ENCODE measurements at regions of chr7 and their contacts with region 1.

Region 1: DNA sequence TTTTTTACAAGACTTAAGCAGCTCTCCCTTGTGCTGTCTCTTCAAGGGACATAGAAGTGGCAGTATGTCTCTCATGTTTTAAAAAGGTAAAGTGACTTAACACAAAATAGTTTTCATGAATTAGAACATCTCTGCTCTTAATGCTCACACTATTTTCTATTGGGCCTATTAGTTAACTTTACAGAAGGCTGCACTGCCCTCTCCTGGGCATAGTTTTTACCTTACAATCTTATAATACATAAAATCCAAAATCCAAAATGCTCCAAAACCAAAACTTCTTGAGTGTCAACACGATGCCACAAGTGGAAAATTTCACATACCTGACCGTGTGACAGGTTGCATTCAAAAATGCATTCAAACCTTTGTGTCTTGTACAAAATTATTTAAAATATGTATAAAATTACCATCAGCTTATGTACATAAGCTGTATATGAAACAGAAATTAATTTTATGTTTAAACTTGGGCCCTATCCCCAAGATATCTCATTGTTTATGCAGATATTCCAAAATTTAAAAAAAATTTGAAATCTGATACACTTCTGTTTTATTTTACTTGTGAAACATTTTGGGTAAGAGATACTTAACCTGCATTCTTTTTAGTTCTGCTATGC is 25.8 kb downstream of the TES start:
- DNase-seq: peak; percentile 31 to 60
- ATAC-seq: peak; percentile 60 to 77; a peak in 4 of 6 replicates
- H3K4me3 ChIP-seq: no peak overlapping the region
- H3K27ac ChIP-seq: no peak overlapping the region
- H3K4me1 ChIP-seq: peaks cover 36% of the 10 kb centered on the region
- CTCF ChIP-seq: peak; percentile 89
- EP300 ChIP-seq: no peak
- POLR2A ChIP-seq: no peak
- RAD21 ChIP-seq: peak; percentile 87 to 89

Region 2: GRCh38 chr7:116167177-116167576 is 68.9 kb before region 1 on chr7:
- CTCF ChIA-PET with region 1: interaction called, 59 read pairs
- POLR2A ChIA-PET with region 1: no interaction called
- DNase-seq: no peak
- ATAC-seq: no peak
- H3K4me3 ChIP-seq: no peak overlapping the region
- H3K27ac ChIP-seq: no peak overlapping the region
- H3K4me1 ChIP-seq: peaks cover 38% of the 10 kb centered on the region
- CTCF ChIP-seq: no peak
- EP300 ChIP-seq: no peak
- POLR2A ChIP-seq: no peak
- RAD21 ChIP-seq: no peak

Region 3: GRCh38 chr7:116180302-116180701 is 55.8 kb before region 1 on chr7:
- CTCF ChIA-PET with region 1: interaction called, 385 read pairs
- POLR2A ChIA-PET with region 1: interaction called, 7 read pairs
- DNase-seq: peak; percentile 36 to 62
- ATAC-seq: peak; percentile 84 to 88
- H3K4me3 ChIP-seq: no peak overlapping the region
- H3K27ac ChIP-seq: no peak overlapping the region
- H3K4me1 ChIP-seq: peaks cover 14% of the 10 kb centered on the region
- CTCF ChIP-seq: peak; percentile 91
- EP300 ChIP-seq: no peak
- POLR2A ChIP-seq: no peak
- RAD21 ChIP-seq: peak; percentile 89 to 94

Region 4: DNA sequence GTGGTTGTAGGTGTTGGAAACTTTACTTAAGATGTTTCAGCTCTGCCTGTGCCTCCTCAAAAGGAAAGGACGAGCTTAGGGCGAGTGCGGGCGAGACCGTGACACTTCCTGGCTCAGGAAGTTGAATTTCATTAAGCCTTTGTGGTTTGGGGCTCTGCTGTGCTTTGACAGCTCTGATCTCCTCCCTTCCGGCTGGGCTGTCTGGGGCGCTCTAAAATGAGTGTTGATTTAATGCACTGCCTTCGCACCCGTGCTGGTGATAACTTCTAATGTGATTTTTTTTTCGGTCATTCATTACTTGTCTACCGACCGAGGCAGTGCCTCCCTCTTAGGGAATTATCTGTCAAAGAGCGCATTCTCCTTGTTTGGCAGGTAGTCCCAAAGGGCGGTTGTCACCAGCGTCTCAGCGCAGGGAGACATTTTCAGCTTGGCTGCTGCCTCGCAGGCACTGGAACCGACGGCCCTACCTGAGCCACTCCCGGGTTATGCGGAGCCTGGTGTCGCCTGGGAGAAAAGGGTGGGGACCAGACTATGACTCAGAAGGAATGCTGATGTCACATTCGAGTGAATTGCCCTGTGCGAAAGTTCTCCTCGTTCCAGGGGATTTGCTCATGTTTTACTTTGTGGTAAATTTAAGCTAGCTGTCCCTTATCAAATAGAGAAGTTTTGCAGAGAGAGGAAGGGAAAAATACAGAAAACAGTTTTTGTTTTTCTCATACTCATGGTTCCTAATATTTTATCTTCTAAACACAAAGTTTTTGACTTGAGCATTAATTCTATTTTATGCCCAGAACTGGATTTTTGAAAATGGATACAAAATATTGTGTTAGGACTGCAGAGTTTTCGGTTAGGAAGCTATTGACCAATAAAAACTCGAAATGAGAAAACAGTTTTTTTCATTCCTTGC is 24.9 kb before region 1 on chr7:
- CTCF ChIA-PET with region 1: interaction called, 41 read pairs
- POLR2A ChIA-PET with region 1: interaction called, 6 read pairs
- DNase-seq: peak; percentile 87 to 92
- ATAC-seq: peak; percentile 86 to 88
- H3K4me3 ChIP-seq: peak overlapping the region; percentile 89
- H3K27ac ChIP-seq: peak overlapping the region; percentile 83 to 96
- H3K4me1 ChIP-seq: peaks cover 35% of the 10 kb centered on the region
- CTCF ChIP-seq: no peak
- EP300 ChIP-seq: peak in 1 of 2 experiments; percentile 16; a peak in 1 of 5 replicates
- POLR2A ChIP-seq: peak; percentile 36
- RAD21 ChIP-seq: no peak

Region 5: DNA sequence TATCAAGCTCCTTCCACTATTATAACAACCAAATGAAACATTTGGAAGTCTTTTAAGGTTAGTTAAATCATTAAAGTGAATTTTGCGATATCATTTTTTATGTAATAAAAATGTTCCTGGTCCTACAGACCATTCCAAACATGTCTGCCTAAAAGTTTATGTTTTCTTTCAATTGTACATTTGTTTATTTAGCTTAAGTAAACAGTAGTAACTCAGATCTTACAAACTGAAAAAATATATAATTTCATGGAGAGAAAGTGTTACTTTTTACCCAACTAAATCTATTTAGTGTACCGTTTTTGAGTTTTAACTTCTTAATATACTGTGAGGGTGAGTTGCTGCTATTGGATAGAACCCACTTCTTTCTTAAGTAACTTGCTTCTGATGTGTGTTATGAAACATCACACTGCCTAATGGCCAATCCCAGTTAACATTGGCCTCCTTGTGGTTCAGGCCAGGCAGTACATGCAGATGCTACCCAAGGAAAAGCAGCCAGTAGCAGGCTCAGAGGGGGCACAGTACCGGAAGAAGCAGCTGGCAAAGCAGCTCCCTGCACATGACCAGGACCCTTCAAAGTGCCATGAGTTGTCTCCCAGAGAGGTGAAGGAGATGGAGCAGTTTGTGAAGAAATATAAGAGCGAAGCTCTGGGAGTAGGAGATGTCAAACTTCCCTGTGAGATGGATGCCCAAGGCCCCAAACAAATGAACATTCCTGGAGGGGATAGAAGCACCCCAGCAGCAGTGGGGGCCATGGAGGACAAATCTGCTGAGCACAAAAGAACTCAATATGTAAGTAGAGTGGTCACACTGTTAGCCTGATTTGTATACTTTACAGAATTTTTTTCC is 13.8 kb after region 1 on chr7:
- CTCF ChIA-PET with region 1: interaction called, 19 read pairs
- POLR2A ChIA-PET with region 1: no interaction called
- DNase-seq: peak; percentile 45 to 78
- ATAC-seq: peak; percentile 96 to 97
- H3K4me3 ChIP-seq: no peak overlapping the region
- H3K27ac ChIP-seq: no peak overlapping the region
- H3K4me1 ChIP-seq: peaks cover 7% of the 10 kb centered on the region; the same call in 1 of the 3 replicates
- CTCF ChIP-seq: peak; percentile 33
- EP300 ChIP-seq: no peak
- POLR2A ChIP-seq: no peak
- RAD21 ChIP-seq: peak; percentile 36 to 55; a peak in 3 of 5 replicates

Region 6: GRCh38 chr7:116340943-116341907 is 105.1 kb after region 1 on chr7:
- CTCF ChIA-PET with region 1: no interaction called
- POLR2A ChIA-PET with region 1: no interaction called
- DNase-seq: peak in 1 of 2 experiments; percentile 48
- ATAC-seq: peak in 1 of 2 experiments; percentile 81; a peak in 3 of 6 replicates
- H3K4me3 ChIP-seq: no peak overlapping the region
- H3K27ac ChIP-seq: peak overlapping the region; percentile 44 to 68; a peak in 5 of 6 replicates
- H3K4me1 ChIP-seq: peaks cover 35% of the 10 kb centered on the region
- CTCF ChIP-seq: peak; percentile 36
- EP300 ChIP-seq: no peak
- POLR2A ChIP-seq: no peak
- RAD21 ChIP-seq: peak; percentile 49 to 59

Region 7: GRCh38 chr7:116706668-116707126 is 470.6 kb after region 1 on chr7:
- CTCF ChIA-PET with region 1: no interaction called
- POLR2A ChIA-PET with region 1: no interaction called
- DNase-seq: peak; percentile 62 to 82
- ATAC-seq: peak; percentile 91 to 94
- H3K4me3 ChIP-seq: peak overlapping the region; percentile 38
- H3K27ac ChIP-seq: peak overlapping the region; percentile 92 to 98
- H3K4me1 ChIP-seq: peaks cover 86% of the 10 kb centered on the region
- CTCF ChIP-seq: no peak
- EP300 ChIP-seq: no peak; a peak in 1 of 5 replicates
- POLR2A ChIP-seq: no peak
- RAD21 ChIP-seq: no peak; a peak in 2 of 5 replicates

Measured in A549 (cell line).